BJ (cell line): ENCODE measurements at regions of chr18 and their contacts with region 1.

Region 1: GRCh38 chr18:7789856-7790552 is 222.9 kb downstream of the PTPRM start:
- DNase-seq: no peak
- H3K4me3 ChIP-seq: no peak overlapping the region
- H3K27me3 ChIP-seq: no peaks in the 10 kb centered on the region
- CTCF ChIP-seq: peak; percentile 57

Region 2: DNA sequence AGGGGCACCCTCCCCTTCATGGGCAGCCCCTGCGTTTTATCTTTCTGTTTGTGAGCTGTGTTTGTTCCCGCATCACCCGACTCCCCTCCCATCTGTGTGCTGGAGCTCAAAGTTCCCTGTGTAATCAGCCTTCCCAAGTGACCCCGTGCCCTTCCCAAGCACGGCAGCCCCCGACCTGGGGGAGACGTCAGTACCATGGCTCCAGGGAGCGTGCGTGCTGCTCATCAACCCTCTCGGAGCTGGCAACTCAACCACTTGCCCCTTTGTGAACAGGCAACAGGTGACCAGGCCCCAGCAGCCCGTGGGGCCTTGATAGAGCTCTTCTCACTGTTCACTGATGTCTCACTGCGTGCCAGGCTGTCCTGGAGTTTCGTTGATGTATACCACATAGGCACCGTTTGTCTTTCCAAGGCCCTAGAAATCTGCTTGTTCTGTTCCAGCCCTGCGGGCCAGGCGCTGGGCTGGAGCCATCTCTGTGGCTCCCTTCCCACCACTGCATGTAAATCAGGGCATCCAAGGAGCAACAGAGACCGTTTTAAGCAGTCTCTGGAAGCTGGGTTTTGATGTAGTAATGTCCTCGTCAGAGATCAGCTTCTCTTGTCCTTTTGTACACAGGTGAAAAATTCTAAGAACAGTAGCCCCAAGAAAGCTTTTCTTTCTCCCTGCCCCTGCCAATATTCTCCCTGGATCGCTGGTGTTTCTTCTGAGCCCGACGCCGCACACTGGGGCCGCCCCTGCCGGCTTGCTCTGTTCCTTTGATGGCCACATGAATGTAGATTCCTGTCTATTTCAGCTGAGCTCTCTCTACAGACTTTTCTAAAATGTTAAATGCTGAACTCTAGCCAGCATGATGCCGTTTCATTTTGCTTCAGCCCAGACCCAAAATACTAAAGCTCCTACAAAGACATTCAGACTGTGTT is 329.9 kb before region 1 on chr18:
- CTCF ChIA-PET with region 1: no interaction called
- POLR2A ChIA-PET with region 1: no interaction called
- DNase-seq: no peak
- H3K4me3 ChIP-seq: no peak overlapping the region
- H3K27me3 ChIP-seq: peaks cover 12% of the 10 kb centered on the region
- CTCF ChIP-seq: no peak

Region 3: GRCh38 chr18:7778181-7778580 is 11.8 kb before region 1 on chr18:
- CTCF ChIA-PET with region 1: interaction called, 11 read pairs
- POLR2A ChIA-PET with region 1: no interaction called
- DNase-seq: no peak
- H3K4me3 ChIP-seq: no peak overlapping the region
- H3K27me3 ChIP-seq: no peaks in the 10 kb centered on the region
- CTCF ChIP-seq: no peak

Region 4: DNA sequence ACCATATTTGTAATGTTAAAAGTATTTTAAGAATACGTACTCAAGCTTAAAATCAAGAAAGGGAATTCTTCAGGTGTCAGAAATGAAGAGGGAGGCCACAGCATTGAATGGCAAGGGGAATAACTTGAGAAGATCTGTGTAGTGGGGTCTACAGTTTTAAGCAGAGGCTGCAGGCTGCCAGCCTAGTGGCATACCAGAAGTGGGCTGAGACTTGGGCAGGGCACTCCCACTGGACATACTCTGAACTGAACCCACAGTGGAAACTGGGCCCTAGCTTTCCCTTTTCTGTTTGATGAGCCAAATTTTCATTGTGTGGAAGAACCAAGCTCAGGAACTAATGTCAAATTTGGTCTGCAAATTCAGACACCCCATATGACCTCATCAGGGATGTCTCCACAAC is 15.9 kb after region 1 on chr18:
- CTCF ChIA-PET with region 1: interaction called, 27 read pairs
- POLR2A ChIA-PET with region 1: no interaction called
- DNase-seq: no peak
- H3K4me3 ChIP-seq: no peak overlapping the region
- H3K27me3 ChIP-seq: no peaks in the 10 kb centered on the region
- CTCF ChIP-seq: no peak

Region 5: GRCh38 chr18:7908681-7909299 is 118.8 kb after region 1 on chr18:
- CTCF ChIA-PET with region 1: no interaction called
- POLR2A ChIA-PET with region 1: no interaction called
- DNase-seq: no peak
- H3K4me3 ChIP-seq: no peak overlapping the region
- H3K27me3 ChIP-seq: no peaks in the 10 kb centered on the region
- CTCF ChIP-seq: no peak

Region 6: GRCh38 chr18:7987284-7987976 is 197.4 kb after region 1 on chr18:
- CTCF ChIA-PET with region 1: no interaction called
- POLR2A ChIA-PET with region 1: no interaction called
- DNase-seq: peak; percentile 9
- H3K4me3 ChIP-seq: no peak overlapping the region
- H3K27me3 ChIP-seq: no peaks in the 10 kb centered on the region
- CTCF ChIP-seq: no peak

Region 7: DNA sequence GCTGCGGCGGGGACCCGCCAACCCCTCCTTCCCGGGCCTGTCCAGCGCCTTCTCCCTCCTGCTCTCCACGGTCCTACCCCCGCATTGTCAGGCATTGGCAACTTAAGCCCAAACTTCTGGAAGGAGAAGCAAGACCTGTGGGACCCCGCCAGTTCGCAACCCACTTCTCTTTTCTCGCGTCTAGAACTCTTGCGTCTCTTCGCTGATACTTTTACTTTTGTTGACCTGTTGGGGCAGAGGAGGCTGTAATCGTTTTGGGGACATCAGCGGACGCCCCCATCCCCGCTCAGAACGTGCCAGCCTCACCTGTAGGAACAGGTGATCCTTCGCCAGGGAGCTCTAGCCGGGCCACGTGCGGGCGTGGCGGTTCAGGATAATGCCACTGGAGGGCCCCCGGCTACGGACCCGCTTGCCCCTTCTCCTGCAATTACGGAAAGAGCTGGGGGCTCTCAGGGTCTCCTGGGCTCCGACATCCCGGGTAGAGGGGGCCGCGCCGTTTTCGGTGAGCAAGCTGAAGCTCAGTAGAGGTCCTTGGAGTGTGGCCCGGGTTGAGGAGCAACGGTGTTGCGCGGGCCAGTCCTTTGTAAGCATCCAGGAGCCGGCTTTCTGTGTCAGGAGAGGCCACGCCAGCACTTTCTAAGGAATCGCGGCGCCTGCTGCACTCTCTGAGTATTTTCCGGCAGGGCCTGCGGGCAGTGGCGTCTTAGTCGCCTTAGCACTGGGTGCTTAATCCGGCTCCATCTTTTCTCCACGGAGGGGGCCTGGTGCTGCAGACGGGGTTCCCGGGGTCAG is 917.0 kb after region 1 on chr18:
- CTCF ChIA-PET with region 1: no interaction called
- POLR2A ChIA-PET with region 1: no interaction called
- DNase-seq: no peak
- H3K4me3 ChIP-seq: peak overlapping the region; percentile 89
- H3K27me3 ChIP-seq: no peaks in the 10 kb centered on the region
- CTCF ChIP-seq: peak; percentile 39